ENCODE measurements at regions of chr9 and their contacts with region 1.

Region 1: GRCh38 chr9:109012876-109013678 is at the start of gene CTNNAL1:
- DNase-seq: peak; percentile 97
- H3K4me3 ChIP-seq: peak within 1 kb of the TSS; percentile 81
- H3K27ac ChIP-seq: peak within 1 kb of the TSS; percentile 72
- H3K4me1 ChIP-seq: no peaks in the 10 kb centered on the region
- H3K27me3 ChIP-seq: no peaks in the 10 kb centered on the region
- CTCF ChIP-seq: no peak
- total RNA-seq, gene CTNNAL1: 22.4 to 30.2 TPM

Region 2: GRCh38 chr9:108953983-108954574 is 59.0 kb before region 1 on chr9:
- intact Hi-C with region 1: no loop called
- DNase-seq: no peak
- H3K4me3 ChIP-seq: no peak overlapping the region
- H3K27ac ChIP-seq: no peak overlapping the region
- H3K4me1 ChIP-seq: no peaks in the 10 kb centered on the region
- H3K27me3 ChIP-seq: no peaks in the 10 kb centered on the region
- CTCF ChIP-seq: peak; percentile 54

Region 3: DNA sequence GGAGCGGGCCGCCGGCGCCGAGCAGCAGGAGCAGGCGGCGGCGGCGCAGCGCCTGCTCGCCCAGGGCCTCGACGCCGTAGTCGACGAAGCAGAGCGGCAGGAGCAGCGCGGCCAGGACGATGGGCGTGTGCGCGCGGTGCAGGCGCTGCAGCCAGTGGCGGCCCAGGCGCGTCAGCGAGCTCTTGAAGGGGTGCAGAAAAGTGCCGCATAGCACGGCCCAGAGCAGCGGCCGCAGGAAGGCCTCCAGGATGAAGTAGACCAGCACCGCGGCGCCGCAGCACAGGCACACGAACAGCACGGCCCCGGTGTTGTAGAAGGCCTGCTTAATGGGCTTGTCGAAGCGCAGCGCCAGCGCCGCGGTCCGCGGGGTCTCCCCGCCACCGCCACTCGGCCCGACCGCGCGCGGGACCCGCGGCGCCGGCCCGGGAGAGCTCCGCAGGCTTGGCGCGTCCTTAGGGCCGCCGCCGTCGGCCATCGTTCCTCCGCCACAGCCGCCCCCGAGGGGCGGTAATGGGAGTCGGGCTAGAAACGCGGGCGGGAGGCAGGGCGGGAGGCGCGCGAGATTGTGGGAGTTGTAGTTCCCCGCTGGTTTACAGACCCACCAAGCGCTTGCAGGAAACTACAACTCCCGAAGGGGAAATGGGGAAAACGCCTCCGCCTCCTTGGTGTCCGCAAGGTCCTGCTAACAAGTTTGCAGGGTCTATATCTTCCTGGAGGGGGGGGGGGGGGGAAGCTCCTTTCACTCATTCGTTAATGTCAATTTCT is 106.5 kb after region 1 on chr9 and contains the start of gene TMEM245:
- intact Hi-C with region 1: loop called (anchors 10 kb)
- DNase-seq: peak; percentile 97
- H3K4me3 ChIP-seq: peak within 1 kb of the TSS; percentile 63
- H3K27ac ChIP-seq: peak within 1 kb of the TSS; percentile 92
- H3K4me1 ChIP-seq: peaks cover 9% of the 10 kb centered on the region
- H3K27me3 ChIP-seq: no peaks in the 10 kb centered on the region
- CTCF ChIP-seq: no peak
- total RNA-seq, gene TMEM245: 25.1 to 39.7 TPM